Activated naive CD4-positive, alpha-beta T cell treated with anti-CD3 and anti-CD28 coated beads for 36 hours (primary cell): ENCODE measurements at regions of chr13 and their contacts with region 1.

Region 1: GRCh38 chr13:57624565-57625435 is 6.7 kb upstream of the PCDH17 start:
- DNase-seq: no peak
- H3K4me3 Mint-ChIP-seq: no peak overlapping the region
- H3K27ac Mint-ChIP-seq: no peak overlapping the region
- H3K4me1 Mint-ChIP-seq: peaks cover 13% of the 10 kb centered on the region
- H3K27me3 Mint-ChIP-seq: peaks cover 29% of the 10 kb centered on the region

Region 2: GRCh38 chr13:58960888-58961287 is 1336.1 kb after region 1 on chr13:
- CTCF ChIA-PET with region 1: no interaction called
- intact Hi-C with region 1: loop called (anchors 5 kb)
- DNase-seq: no peak
- H3K4me3 Mint-ChIP-seq: no peak overlapping the region
- H3K27ac Mint-ChIP-seq: no peak overlapping the region
- H3K4me1 Mint-ChIP-seq: no peaks in the 10 kb centered on the region
- H3K27me3 Mint-ChIP-seq: no peaks in the 10 kb centered on the region

Region 3: GRCh38 chr13:59176775-59177174 is 1552.0 kb after region 1 on chr13:
- CTCF ChIA-PET with region 1: no interaction called
- intact Hi-C with region 1: loop called (anchors 10 kb)
- DNase-seq: no peak
- H3K4me3 Mint-ChIP-seq: no peak overlapping the region
- H3K27ac Mint-ChIP-seq: no peak overlapping the region
- H3K4me1 Mint-ChIP-seq: no peaks in the 10 kb centered on the region
- H3K27me3 Mint-ChIP-seq: no peaks in the 10 kb centered on the region

Region 4: GRCh38 chr13:59261928-59262488 is 1637.2 kb after region 1 on chr13:
- CTCF ChIA-PET with region 1: no interaction called
- intact Hi-C with region 1: loop called (anchors 5 kb)
- DNase-seq: no peak
- H3K4me3 Mint-ChIP-seq: no peak overlapping the region
- H3K27ac Mint-ChIP-seq: no peak overlapping the region
- H3K4me1 Mint-ChIP-seq: no peaks in the 10 kb centered on the region
- H3K27me3 Mint-ChIP-seq: no peaks in the 10 kb centered on the region

Region 5: DNA sequence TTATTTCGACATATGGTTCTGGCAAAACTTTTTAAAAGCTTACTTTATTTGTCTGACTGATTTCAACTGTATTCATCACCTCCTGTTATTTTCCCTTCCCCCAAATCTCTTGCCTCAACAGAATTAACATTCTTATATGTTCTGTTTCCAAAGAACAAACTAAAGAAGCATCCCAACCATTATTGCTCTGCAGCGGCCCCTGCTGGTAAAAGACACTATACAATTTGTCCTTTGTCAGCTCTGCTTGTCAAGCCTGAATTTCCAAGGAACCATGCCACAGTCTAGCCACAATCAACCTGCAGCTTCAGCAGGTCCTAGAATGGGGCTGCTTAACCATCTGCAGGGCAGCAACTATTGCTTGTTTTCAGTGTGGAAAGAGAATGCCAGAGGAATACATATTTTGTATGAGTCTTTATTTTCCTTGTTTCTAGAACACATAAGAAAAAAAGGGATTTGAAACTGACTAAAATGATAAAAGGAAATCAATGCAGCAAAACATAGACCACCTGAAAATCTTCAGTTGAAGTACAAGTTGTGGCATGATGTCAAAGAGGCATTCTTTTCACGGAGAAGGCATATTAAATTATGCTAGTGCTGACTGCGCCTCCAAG is 1693.6 kb after region 1 on chr13:
- CTCF ChIA-PET with region 1: no interaction called
- intact Hi-C with region 1: loop called (anchors 1 kb)
- DNase-seq: peak; percentile 80
- H3K4me3 Mint-ChIP-seq: no peak overlapping the region
- H3K27ac Mint-ChIP-seq: no peak overlapping the region
- H3K4me1 Mint-ChIP-seq: no peaks in the 10 kb centered on the region
- H3K27me3 Mint-ChIP-seq: peaks cover 17% of the 10 kb centered on the region